Activated T-helper 1 cell treated with anti-CD3 and anti-CD28 coated beads, Interleukin-12 subunit alpha, Interleukin-12 subunit beta, Interleukin-2, Interleukin-4 antibody, amounts not matched to agents 30 ng/mL and 10 ng/mL and 1 ng/mL, durations not matched to agents 14 hours and 24 hours and 36 hours (primary cell): ENCODE measurements at regions of chr10 and their contacts with region 1.

Region 1: GRCh38 chr10:31808258-31809218 is 120.1 kb downstream of the ARHGAP12 start:
- DNase-seq: peak; percentile 2
- H3K4me3 Mint-ChIP-seq: peak overlapping the region; percentile 50
- H3K27ac Mint-ChIP-seq: peak overlapping the region; percentile 57
- H3K4me1 Mint-ChIP-seq: peaks cover 7% of the 10 kb centered on the region
- H3K27me3 Mint-ChIP-seq: peaks cover 3% of the 10 kb centered on the region

Region 2: DNA sequence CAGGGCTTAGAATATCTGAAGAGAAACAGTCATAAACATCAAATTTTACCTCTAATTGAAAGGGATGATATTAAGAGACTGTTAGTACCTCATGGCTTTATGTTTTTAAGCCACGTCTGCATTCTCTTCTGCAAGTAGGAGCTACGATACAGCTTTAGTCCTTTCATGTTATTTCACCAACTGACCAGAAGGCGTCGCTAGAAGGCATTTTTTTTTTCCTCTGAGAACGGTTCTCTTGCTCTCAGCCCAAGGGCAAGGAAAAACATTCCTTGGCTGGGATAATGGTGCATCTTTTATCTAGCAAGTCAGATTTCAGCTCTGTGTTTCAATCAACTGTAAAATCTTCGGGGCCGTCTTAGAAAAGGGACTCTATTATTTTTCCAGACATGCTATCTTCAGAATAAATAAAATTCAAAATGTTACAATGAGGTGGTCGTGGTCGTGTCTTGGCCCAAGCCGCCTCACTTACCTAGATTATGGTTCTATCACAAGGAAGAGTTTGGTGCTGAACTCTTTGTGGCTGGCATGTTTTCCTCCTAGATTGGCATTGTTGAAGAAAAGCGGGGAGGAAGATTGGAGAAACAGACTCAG is 1137.4 kb before region 1 on chr10:
- intact Hi-C with region 1: loop called (anchors 1 kb)
- DNase-seq: peak; percentile 35
- H3K4me3 Mint-ChIP-seq: peak overlapping the region; percentile 43
- H3K27ac Mint-ChIP-seq: no peak overlapping the region
- H3K4me1 Mint-ChIP-seq: peaks cover 9% of the 10 kb centered on the region
- H3K27me3 Mint-ChIP-seq: peaks cover 16% of the 10 kb centered on the region

Region 3: DNA sequence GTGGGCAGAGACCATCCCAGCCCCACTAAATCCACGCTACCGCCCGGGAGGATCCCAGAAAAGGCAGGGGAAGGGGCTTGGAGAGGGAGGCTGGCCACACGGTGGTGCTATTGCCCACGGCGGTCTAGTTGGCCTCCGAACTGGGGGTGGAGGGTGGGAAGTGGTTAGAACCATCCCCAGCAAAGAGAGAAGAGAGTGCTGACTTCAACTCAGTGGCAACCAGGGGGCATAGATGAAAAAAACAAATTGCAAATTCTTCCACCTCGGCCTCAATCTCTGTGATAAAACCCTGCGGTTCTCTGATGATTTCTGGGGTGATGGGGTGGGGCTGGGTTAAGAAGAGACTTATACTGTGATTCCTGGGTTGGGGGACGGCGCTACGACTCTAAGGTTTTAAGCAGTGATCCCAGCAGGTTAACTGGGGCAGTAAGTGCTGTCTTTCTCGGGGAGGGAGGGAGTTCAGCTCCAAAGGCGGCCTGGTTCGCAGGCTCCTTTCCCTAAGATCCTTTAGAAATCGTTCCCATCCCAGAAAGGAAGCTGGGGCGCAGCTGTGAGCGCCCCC is 1024.5 kb before region 1 on chr10:
- intact Hi-C with region 1: loop called (anchors 1 kb)
- DNase-seq: peak; percentile 67
- H3K4me3 Mint-ChIP-seq: peak overlapping the region; percentile 79
- H3K27ac Mint-ChIP-seq: peak overlapping the region; percentile 75
- H3K4me1 Mint-ChIP-seq: peaks cover 29% of the 10 kb centered on the region
- H3K27me3 Mint-ChIP-seq: peaks cover 7% of the 10 kb centered on the region

Region 4: DNA sequence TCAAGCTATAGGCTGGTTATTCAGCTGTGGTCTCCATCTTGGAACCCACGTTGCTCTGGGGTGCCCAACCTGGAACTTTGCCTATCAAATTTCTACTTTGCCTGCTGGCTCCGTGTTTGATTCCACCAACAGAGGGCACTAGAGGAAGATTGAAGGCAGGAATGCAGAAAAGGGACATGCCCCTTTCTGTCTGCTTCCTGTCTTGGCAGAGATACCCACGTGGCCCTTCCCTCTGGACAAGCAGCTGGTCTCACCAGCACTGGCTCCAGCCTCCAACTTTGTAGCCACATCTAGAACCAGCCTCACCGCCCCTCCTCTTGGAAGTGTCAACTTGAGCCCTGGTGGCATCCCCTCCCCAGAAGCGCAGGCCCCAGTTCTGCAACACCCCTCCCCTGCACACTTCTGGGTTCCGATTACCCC is 724.8 kb before region 1 on chr10:
- intact Hi-C with region 1: loop called (anchors 5 kb)
- DNase-seq: peak; percentile 58
- H3K4me3 Mint-ChIP-seq: no peak overlapping the region
- H3K27ac Mint-ChIP-seq: peak overlapping the region; percentile 11
- H3K4me1 Mint-ChIP-seq: peaks cover 24% of the 10 kb centered on the region
- H3K27me3 Mint-ChIP-seq: peaks cover 4% of the 10 kb centered on the region

Region 5: GRCh38 chr10:31603235-31604087 is 205.1 kb before region 1 on chr10:
- intact Hi-C with region 1: loop called (anchors 1 kb)
- DNase-seq: peak; percentile 82
- H3K4me3 Mint-ChIP-seq: peak overlapping the region; percentile 80
- H3K27ac Mint-ChIP-seq: no peak overlapping the region
- H3K4me1 Mint-ChIP-seq: peaks cover 29% of the 10 kb centered on the region
- H3K27me3 Mint-ChIP-seq: peaks cover 6% of the 10 kb centered on the region

Region 6: DNA sequence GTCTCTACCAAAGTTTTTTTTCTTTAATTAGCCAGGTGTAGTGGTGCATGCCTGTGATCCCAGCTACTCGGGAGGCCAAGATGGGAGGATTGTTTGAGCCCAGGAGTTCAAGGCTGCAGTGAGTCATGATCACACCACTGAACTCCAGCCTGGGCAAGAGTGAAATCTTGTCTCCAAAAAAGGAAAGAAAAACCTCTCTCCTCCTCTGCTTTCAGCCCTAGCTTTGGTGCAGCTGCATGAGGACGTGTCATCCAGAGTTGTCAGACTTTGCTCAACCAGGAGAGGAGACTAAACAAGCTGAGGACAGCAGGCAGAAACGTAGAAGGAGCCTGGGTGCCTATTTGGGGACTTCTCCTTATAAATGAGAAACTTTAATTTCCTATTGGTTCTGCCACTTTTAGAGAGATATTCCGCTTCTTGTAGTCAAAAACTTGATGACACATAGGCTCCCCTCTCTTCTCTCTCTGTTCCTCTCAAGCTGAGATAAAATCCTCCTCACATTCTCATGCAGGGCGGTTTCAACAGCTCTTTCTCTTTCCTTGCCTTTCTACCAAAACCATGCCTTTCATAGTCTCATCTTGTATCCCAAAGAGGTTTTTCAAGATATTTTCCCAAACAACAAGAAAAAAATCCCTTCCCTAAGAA is 85.3 kb before region 1 on chr10:
- intact Hi-C with region 1: no loop called
- DNase-seq: no peak
- H3K4me3 Mint-ChIP-seq: no peak overlapping the region
- H3K27ac Mint-ChIP-seq: no peak overlapping the region
- H3K4me1 Mint-ChIP-seq: peaks cover 11% of the 10 kb centered on the region
- H3K27me3 Mint-ChIP-seq: peaks cover 6% of the 10 kb centered on the region

Region 7: DNA sequence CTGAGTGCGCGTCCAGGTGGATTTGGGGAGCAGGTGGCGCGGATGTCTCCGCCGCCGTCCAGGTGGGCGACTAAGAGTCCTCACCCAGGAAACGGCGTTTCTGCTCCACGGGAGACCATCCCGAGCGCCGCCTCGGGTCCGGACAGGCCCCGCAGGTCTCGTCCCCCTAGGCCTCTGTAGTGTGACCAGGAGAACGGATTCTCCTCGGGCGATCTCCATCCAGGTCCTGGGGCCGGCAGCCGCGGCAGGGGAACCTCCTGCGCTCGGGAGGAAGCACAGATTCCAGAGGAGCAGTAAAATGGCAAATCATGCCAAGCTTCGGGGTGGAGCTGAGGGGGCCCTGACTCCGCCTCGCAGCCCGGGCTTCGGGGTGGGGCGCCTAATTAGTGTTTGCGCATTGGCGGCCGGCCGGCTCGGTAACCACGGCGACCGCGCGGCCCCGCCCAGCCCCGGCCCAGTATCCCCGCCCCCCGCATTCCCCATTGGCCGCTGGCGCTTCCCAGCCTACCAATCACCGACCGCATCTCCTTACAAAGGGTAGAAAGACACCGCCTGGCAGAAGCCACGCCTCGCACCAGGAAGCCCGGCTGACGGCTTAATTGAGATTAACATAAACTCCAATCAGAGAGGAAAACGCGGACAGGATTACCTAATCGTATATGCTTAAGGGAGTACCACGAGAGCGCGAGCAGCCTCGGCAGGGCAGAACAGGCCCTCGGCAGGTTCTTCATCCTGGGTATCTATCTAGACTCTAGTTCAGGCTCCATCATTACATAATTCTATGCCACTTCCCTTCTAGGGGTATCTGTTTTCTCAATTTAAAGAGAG is 48.5 kb before region 1 on chr10:
- intact Hi-C with region 1: loop called (anchors 1 kb)
- DNase-seq: peak; percentile 92
- H3K4me3 Mint-ChIP-seq: peak overlapping the region; percentile 83
- H3K27ac Mint-ChIP-seq: peak overlapping the region; percentile 89
- H3K4me1 Mint-ChIP-seq: peaks cover 28% of the 10 kb centered on the region
- H3K27me3 Mint-ChIP-seq: peaks cover 5% of the 10 kb centered on the region

Region 8: DNA sequence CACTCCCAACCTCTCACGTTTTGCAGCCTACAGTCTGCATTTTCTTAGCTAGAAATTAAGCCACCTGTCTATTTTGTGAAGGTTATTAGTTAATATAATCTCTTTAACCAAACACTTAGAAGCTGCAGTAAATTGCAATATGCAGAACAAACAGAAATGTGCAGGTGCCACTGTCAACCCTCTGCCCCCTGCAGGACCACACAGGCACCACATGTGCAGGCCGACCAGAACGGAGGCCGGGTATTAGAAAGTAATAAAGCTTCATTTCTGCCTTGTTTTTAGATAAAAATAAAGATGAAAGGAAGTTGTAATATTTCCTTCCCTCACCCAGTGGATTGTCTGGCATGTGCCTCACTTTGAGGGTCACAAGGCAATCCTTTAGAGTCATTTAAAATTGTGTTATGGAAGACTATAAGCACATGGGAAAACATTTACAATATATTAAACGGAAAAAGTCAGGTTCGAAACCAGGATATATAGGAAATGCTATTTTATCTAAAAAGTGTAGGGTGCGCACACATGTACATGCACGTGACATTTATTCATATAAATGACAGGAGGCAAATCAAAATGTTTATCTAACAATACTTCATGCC is 38.1 kb before region 1 on chr10:
- intact Hi-C with region 1: loop called (anchors 1 kb)
- DNase-seq: peak; percentile 22
- H3K4me3 Mint-ChIP-seq: no peak overlapping the region
- H3K27ac Mint-ChIP-seq: no peak overlapping the region
- H3K4me1 Mint-ChIP-seq: no peaks in the 10 kb centered on the region
- H3K27me3 Mint-ChIP-seq: no peaks in the 10 kb centered on the region